Cardiac septum (tissue), 1 donor: ENCODE measurements at regions of chrX and their contacts with region 1.

Region 1: DNA sequence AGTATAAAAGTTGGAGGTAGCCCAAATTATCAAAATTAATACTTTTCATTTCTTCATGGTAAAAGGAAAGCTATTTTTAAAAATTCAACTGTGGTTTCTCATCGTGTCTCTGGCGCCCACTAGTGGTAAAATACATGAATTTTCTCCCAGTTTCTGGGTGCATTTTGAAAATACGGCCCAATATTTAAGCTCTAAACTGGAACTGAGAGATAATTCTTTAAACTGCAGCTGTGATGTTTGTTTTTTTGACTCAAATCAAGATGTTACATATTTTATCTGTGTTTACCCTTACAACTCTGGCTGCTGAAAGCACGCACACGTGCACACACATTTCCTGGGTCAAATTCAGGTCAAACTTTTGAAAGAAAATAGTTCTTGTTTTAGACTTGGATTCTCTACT is 123.9 kb upstream of the ACSL4 start:
- DNase-seq: no peak

Region 2: GRCh38 chrX:109485470-109486340 is 371.3 kb before region 1 on chrX:
- intact Hi-C with region 1: loop called (anchors 10 kb)
- DNase-seq: peak; percentile 78

Region 3: DNA sequence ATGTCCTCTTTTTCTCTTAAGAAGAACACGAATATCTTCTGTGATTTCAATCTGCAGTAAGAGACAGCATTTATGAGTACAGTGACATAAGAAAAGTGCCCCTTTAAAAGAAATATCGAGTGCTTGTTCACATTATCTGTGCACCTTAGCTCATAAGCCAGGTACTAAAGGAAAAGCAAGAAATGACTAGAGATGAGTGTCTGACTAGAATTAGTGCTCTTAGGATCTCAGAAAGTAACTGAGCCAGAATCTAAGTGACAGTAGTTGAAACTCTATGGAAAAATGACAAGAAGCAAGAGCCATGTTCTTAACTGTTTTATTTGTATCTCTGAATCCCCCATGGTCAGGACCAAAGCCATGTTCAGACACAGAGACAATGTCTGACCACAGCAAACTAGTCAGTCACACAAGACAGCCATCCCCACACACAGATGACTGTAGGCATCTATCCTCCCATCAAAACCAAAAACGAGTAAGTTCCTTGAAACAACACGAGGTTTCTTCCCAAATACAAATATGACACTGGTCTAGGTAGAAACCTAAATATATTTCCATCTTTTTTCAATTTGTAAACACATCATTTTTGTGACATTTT is 160.7 kb before region 1 on chrX:
- intact Hi-C with region 1: no loop called
- DNase-seq: no peak

Region 4: GRCh38 chrX:109709129-109709631 is 147.8 kb before region 1 on chrX:
- intact Hi-C with region 1: loop called (anchors 2 kb)
- DNase-seq: no peak

Region 5: DNA sequence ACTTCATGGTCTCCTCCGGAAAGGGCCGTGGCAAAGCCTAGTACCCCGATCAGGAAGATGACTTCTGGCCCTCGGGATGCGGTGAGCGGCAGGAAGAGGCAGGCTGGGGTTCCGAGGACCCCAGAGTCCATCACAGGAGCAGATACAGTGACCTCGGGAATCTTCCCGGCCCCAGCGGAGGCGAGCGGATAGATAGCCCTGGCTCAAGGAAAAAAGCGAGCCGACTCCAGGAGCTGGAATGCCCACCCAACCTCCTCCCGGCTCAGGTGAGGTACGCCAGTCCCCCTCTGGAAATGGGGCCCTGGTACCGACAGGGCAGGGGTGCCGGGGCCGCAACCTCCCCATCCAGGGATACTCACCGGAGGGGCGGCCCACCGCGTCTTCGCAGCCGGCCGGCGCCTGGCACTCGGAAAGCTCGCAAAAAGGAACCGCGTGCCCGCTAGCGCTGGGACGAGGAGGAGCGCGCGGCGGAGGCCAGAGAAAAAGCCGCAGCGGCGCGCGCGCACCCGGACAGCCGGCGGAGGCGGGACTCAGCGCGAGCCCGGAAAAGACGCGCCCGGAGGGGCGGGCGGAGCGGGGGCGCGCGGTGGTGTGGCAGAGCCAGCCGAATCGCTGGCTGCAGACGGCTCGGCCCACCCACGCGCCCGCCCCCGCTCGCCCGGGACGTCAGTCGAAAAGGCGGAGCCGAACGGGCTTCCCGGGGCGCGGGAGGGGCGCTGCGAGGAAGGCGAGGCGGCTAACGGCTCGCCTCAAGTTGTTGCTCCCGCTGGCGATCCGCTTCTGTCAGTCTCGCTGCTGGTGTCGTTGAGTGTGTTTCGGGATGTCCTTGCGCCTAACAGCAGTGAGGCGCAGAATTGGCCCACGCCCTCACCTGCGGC is 124.0 kb before region 1 on chrX and contains the start of gene ACSL4:
- intact Hi-C with region 1: loop called (anchors 5 kb)
- DNase-seq: peak; percentile 93
- total RNA-seq, gene ACSL4: 49.4 TPM